CD4-positive, alpha-beta T cell (primary cell): ENCODE measurements at regions of chr11 and their contacts with region 1.

Region 1: GRCh38 chr11:128579798-128580504 is 7.4 kb downstream of the ETS1 start:
- DNase-seq: peak in 3 of 14 experiments; percentile 22 to 56 (median 47)
- ATAC-seq: peak; percentile 76
- H3K4me3 ChIP-seq: no peak overlapping the region
- H3K4me3 Mint-ChIP-seq: no peak overlapping the region
- H3K27ac ChIP-seq: no peak overlapping the region
- H3K27ac Mint-ChIP-seq: no peak overlapping the region
- H3K4me1 ChIP-seq: peaks cover 6% of the 10 kb centered on the region
- H3K4me1 Mint-ChIP-seq: peaks cover 62% of the 10 kb centered on the region
- H3K27me3 ChIP-seq: no peaks in the 10 kb centered on the region
- H3K27me3 Mint-ChIP-seq: no peaks in the 10 kb centered on the region
- CTCF ChIP-seq: no peak

Region 2: DNA sequence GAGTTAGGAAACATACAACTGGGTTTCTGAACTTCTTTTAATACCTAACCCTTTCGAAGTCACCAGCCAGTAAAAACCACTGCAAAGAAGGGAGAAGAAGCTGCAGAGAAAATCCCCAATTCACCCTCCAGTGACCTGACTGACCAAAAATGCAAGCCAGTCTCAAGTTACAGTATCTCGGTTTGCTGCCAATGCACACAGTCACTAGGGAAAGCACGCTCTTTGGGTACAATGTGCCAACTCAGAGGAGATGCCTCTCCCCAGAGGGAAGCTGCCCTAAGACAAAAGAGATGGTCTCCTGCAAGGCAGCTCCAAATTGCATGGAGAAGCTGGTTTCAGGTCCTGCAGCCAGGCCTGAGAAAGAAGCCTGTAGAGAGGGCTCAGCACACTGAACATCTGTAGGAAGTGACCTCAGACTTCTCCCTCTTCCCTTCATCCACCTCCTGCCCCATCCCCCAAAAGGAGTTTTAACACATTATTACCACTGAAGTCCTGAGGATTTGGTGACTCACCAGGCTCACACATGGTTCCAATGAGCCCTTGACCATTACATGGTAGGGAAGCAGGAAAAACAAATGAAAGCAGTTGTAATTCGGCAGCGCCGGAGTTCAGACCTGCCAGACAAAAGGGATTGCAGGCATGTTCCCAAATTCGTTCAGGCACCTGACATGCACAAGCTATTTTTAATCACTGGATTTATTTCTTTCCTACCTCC is 82.7 kb before region 1 on chr11:
- CTCF ChIA-PET with region 1: no interaction called
- POLR2A ChIA-PET with region 1: no interaction called
- intact Hi-C with region 1: no loop called
- DNase-seq: peak in 3 of 14 experiments; percentile 16 to 65 (median 59)
- ATAC-seq: no peak
- H3K4me3 ChIP-seq: peak overlapping the region; percentile 39
- H3K4me3 Mint-ChIP-seq: peak overlapping the region; percentile 65
- H3K27ac ChIP-seq: peak overlapping the region; percentile 39 to 93
- H3K27ac Mint-ChIP-seq: peak overlapping the region; percentile 99
- H3K4me1 ChIP-seq: peaks cover 75% of the 10 kb centered on the region
- H3K4me1 Mint-ChIP-seq: peaks cover 100% of the 10 kb centered on the region
- H3K27me3 ChIP-seq: no peaks in the 10 kb centered on the region
- H3K27me3 Mint-ChIP-seq: no peaks in the 10 kb centered on the region
- CTCF ChIP-seq: no peak

Region 3: GRCh38 chr11:128616161-128616560 is 36.2 kb after region 1 on chr11:
- CTCF ChIA-PET with region 1: no interaction called
- POLR2A ChIA-PET with region 1: interaction called, 3 read pairs
- intact Hi-C with region 1: loop called in 1 of 2 experiments (anchors 5 kb)
- DNase-seq: no peak
- ATAC-seq: no peak
- H3K4me3 ChIP-seq: no peak overlapping the region
- H3K4me3 Mint-ChIP-seq: no peak overlapping the region
- H3K27ac ChIP-seq: no peak overlapping the region
- H3K27ac Mint-ChIP-seq: peak overlapping the region; percentile 54
- H3K4me1 ChIP-seq: peaks cover 20% of the 10 kb centered on the region
- H3K4me1 Mint-ChIP-seq: peaks cover 62% of the 10 kb centered on the region
- H3K27me3 ChIP-seq: no peaks in the 10 kb centered on the region
- H3K27me3 Mint-ChIP-seq: no peaks in the 10 kb centered on the region
- CTCF ChIP-seq: no peak

Region 4: DNA sequence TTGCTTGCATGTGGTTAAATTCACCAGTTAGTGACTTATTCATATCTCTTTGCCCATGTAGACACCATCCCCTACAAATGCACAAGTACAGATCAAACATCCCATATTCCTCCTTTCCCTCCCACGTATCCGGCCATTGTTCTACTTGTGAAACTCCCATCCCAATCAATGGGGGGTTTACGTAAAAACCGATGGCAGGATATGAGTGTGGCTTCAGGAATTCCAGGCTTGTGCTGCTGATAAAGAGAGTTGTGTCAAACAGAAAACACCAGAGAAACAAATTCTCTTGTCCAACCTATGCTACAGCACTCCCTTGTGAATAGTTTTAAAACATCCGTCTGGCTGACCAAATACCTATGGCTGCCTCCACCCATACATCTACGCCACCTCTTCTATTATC is 129.5 kb after region 1 on chr11:
- CTCF ChIA-PET with region 1: no interaction called
- POLR2A ChIA-PET with region 1: no interaction called
- intact Hi-C with region 1: no loop called
- DNase-seq: no peak
- ATAC-seq: no peak
- H3K4me3 ChIP-seq: no peak overlapping the region
- H3K4me3 Mint-ChIP-seq: peak overlapping the region; percentile 13
- H3K27ac ChIP-seq: no peak overlapping the region
- H3K27ac Mint-ChIP-seq: peak overlapping the region; percentile 81
- H3K4me1 ChIP-seq: peaks cover 69% of the 10 kb centered on the region
- H3K4me1 Mint-ChIP-seq: peaks cover 99% of the 10 kb centered on the region
- H3K27me3 ChIP-seq: no peaks in the 10 kb centered on the region
- H3K27me3 Mint-ChIP-seq: no peaks in the 10 kb centered on the region
- CTCF ChIP-seq: no peak